ENCODE measurements at regions of chr2 and their contacts with region 1.

Region 1: GRCh38 chr2:236871500-236872001 is 214.1 kb upstream of the COPS8 start:
- DNase-seq: peak; percentile 90
- ATAC-seq: peak; percentile 88
- H3K4me3 ChIP-seq: peak overlapping the region; percentile 0; the same call in 1 of the 2 replicates
- H3K27ac ChIP-seq: peak overlapping the region; percentile 90
- H3K4me1 ChIP-seq: peaks cover 47% of the 10 kb centered on the region
- H3K27me3 ChIP-seq: no peaks in the 10 kb centered on the region
- CTCF ChIP-seq: no peak

Region 2: GRCh38 chr2:236769921-236770671 is 101.5 kb before region 1 on chr2:
- CTCF ChIA-PET with region 1: no interaction called
- POLR2A ChIA-PET with region 1: no interaction called
- intact Hi-C with region 1: loop called (anchors 10 kb)
- DNase-seq: peak; percentile 95
- ATAC-seq: peak; percentile 93
- H3K4me3 ChIP-seq: peak overlapping the region; percentile 16; the same call in 1 of the 2 replicates
- H3K27ac ChIP-seq: peak overlapping the region; percentile 91
- H3K4me1 ChIP-seq: peaks cover 25% of the 10 kb centered on the region
- H3K27me3 ChIP-seq: no peaks in the 10 kb centered on the region
- CTCF ChIP-seq: no peak

Region 3: GRCh38 chr2:236824877-236825692 is 46.5 kb before region 1 on chr2:
- CTCF ChIA-PET with region 1: no interaction called
- POLR2A ChIA-PET with region 1: no interaction called
- intact Hi-C with region 1: loop called (anchors 2 kb)
- DNase-seq: peak; percentile 73
- ATAC-seq: peak; percentile 91
- H3K4me3 ChIP-seq: no peak overlapping the region
- H3K27ac ChIP-seq: peak overlapping the region; percentile 52
- H3K4me1 ChIP-seq: peaks cover 26% of the 10 kb centered on the region
- H3K27me3 ChIP-seq: no peaks in the 10 kb centered on the region
- CTCF ChIP-seq: no peak

Region 4: DNA sequence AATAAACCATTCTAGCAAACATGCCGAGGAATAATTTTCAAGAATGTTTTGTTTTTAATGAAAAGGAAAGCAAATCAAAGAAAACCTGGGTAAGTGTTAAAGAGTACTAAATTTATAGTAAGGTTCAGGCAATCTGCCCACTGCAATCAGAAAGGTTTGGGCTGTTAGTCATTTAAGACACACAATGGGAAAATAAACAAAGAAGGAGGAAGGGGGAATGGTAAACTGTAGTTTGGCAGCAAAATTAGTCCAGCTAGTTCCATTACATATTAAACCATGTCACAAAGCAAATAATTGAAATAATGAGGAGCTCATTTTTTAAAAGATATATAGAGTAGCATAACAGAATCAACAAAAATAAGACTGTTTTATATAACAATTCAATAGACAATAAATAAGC is 126.7 kb after region 1 on chr2:
- CTCF ChIA-PET with region 1: no interaction called
- POLR2A ChIA-PET with region 1: interaction called, 7 read pairs
- intact Hi-C with region 1: loop called (anchors 1 kb)
- DNase-seq: peak; percentile 82
- ATAC-seq: peak; percentile 82
- H3K4me3 ChIP-seq: peak overlapping the region; percentile 54
- H3K27ac ChIP-seq: peak overlapping the region; percentile 95
- H3K4me1 ChIP-seq: peaks cover 40% of the 10 kb centered on the region
- H3K27me3 ChIP-seq: no peaks in the 10 kb centered on the region
- CTCF ChIP-seq: no peak

Measured in PC-3 (cell line).